Esophagus muscularis mucosa (tissue), 4 donors: ENCODE measurements at regions of chr9 and their contacts with region 1.

Region 1: DNA sequence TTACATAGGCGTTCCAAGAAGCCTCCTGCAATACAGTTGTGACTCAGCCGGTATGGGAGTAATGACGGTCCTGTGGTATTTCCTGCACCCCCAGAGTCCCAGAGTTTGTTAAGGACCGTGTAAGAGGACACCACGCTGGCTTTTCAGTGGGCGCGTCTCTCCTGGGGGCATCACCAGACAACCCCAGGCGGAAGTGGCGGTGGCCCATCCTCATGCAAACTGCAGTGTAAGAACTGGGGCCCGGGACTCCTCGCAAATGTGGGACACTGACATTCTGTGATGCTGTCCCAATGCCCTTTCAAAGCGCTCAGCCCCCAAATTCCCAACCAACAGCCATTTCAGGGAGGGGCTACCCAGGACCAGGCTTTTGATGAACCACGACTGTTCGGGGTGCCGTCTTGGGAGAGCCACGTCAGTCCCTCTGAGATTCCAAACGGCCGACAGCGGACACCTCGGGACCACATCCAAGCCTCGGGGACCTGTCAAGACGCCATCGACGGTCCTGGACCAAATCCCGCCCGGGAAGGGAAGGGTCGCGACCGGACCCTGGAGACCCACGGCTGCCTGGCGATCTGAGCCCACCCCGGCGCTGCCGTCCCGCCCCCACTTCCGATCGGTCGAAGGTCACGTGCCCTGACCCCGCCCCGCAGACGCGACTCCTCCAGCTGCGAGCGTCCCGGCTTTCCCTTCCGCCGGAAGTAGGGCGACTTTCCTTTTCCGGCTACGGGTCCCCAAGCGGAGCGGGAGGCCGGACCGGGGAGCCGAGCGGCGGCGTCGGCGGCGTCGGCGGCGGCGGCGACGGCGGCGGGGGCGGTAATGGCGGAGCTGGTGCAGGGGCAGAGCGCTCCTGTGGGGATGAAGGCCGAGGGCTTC is at the start of gene FUBP3:
- DNase-seq: peak; percentile 97
- H3K4me3 ChIP-seq: peak within 1 kb of the TSS; percentile 79 to 99 (median 88)
- H3K27ac ChIP-seq: peak within 1 kb of the TSS; percentile 85 to 94 (median 88)
- H3K4me1 ChIP-seq: peaks cover 28 to 47% (median 39%) of the 10 kb centered on the region in 4 donors
- H3K27me3 ChIP-seq: no peaks in the 10 kb centered on the region
- CTCF ChIP-seq: peak in 1 of 3 experiments; percentile 4
- EP300 ChIP-seq: no peak
- POLR2A ChIP-seq: peak; percentile 79
- total RNA-seq, gene FUBP3: 40.6 to 64.8 (median 46.4) TPM

Region 2: DNA sequence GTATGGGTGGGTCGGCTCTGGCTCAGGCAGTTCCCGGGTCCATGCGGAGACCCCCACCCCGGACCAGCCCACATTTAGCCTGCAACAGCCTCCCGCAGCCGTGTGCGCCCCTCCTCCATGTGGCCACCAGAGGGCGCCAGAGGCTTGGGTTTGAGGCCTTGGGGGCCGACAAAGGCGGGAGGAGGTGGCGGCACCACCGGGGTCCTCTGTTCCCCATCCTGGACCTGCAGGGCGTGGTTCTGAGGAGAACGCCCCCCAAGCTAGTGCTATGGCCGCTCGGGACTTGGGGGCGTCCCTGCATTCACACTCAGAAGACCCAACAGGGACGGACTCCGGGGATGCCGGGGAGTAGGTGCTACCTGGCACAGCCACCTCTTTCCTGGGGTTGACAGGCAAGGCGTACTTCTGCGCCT is 117.9 kb before region 1 on chr9:
- intact Hi-C with region 1: loop called (anchors 10 kb)
- DNase-seq: no peak
- H3K4me3 ChIP-seq: no peak overlapping the region
- H3K27ac ChIP-seq: no peak overlapping the region
- H3K4me1 ChIP-seq: peaks cover 4 to 15% (median 7%) of the 10 kb centered on the region in 4 donors
- H3K27me3 ChIP-seq: no peaks in the 10 kb centered on the region
- CTCF ChIP-seq: peak; percentile 88 to 93 (median 89)
- EP300 ChIP-seq: no peak
- POLR2A ChIP-seq: no peak

Region 3: GRCh38 chr9:130682490-130683121 is 103.5 kb after region 1 on chr9:
- intact Hi-C with region 1: loop called (anchors 5 kb)
- DNase-seq: no peak
- H3K4me3 ChIP-seq: peak overlapping the region; percentile 65 to 69 (median 67)
- H3K27ac ChIP-seq: no peak overlapping the region
- H3K4me1 ChIP-seq: peaks cover 13 to 17% (median 17%) of the 10 kb centered on the region in 4 donors
- H3K27me3 ChIP-seq: peaks cover 0 to 20% (median 0%) of the 10 kb centered on the region in 4 donors
- CTCF ChIP-seq: peak; percentile 80 to 90 (median 83)
- EP300 ChIP-seq: no peak
- POLR2A ChIP-seq: no peak

Region 4: DNA sequence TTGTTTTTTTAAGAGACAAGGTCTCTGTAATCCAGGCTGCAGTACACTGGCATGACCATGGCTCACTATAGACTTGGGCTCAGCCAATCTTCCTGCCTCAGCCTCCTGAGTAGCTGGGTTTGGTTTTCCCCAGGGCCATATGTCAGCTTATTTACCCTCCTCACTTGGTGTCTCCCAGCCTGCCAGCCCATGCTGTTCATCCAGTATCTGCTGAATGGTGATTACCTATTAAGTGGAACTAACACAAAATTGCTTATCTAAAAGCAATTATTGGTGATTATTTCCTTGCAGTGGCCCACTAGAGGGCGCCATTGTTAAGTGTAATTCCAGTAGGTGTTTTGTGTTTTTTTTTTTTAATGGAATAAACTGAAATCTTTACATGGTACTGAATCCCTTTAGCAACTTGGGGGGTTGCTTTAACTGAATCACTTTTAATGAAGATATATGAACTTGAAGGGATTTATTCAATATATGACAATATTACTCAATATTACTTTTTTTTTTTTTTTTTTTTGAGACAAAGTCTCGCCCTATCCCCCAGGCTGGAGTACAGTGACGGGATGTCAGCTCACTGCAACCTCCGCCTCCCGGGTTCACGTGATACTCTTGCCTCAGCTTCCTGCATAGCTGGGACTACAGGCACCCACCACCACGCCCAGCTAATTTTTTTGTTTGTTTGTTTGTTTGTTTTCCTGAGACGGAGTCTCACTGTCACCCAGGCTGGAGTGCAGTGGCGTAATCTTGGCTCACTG is 128.3 kb after region 1 on chr9:
- intact Hi-C with region 1: no loop called
- DNase-seq: no peak
- H3K4me3 ChIP-seq: no peak overlapping the region
- H3K27ac ChIP-seq: no peak overlapping the region
- H3K4me1 ChIP-seq: peaks cover 0 to 16% (median 14%) of the 10 kb centered on the region in 4 donors
- H3K27me3 ChIP-seq: no peaks in the 10 kb centered on the region
- CTCF ChIP-seq: peak; percentile 65 to 76 (median 68)
- EP300 ChIP-seq: no peak
- POLR2A ChIP-seq: no peak